Astrocyte of the cerebellum (primary cell): ENCODE measurements at regions of chr3 and their contacts with region 1.

Region 1: DNA sequence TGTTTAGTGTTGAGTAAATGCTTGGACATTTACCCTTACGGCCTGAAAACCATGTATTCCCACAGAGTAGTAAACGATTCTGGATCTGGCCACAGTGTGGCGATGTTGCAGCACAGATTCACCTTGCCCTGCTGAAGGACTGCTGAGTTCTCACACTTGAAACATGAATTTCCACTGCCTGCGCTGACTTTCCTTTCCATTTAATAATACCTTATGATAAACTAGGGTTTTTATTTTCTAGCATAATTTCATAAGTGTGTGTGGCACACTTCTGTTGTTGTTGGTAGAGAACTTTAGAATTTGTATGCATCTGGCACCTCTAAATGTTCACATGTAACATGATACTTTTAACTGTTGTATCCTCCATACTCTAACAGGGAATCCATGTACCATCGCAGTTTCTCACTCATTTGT is 53.9 kb downstream of the C3orf38 start:
- DNase-seq: peak; percentile 69
- H3K4me3 ChIP-seq: no peak overlapping the region
- CTCF ChIP-seq: peak; percentile 83

Region 2: GRCh38 chr3:89107461-89108290 is 904.0 kb after region 1 on chr3 and contains the start of gene EPHA3:
- in situ Hi-C with region 1: loop called (anchors 25 kb)
- DNase-seq: peak; percentile 57
- H3K4me3 ChIP-seq: peak within 1 kb of the TSS; percentile 71
- CTCF ChIP-seq: no peak